Lower leg skin (tissue), 4 donors: ENCODE measurements at regions of chr4 and their contacts with region 1.

Region 1: DNA sequence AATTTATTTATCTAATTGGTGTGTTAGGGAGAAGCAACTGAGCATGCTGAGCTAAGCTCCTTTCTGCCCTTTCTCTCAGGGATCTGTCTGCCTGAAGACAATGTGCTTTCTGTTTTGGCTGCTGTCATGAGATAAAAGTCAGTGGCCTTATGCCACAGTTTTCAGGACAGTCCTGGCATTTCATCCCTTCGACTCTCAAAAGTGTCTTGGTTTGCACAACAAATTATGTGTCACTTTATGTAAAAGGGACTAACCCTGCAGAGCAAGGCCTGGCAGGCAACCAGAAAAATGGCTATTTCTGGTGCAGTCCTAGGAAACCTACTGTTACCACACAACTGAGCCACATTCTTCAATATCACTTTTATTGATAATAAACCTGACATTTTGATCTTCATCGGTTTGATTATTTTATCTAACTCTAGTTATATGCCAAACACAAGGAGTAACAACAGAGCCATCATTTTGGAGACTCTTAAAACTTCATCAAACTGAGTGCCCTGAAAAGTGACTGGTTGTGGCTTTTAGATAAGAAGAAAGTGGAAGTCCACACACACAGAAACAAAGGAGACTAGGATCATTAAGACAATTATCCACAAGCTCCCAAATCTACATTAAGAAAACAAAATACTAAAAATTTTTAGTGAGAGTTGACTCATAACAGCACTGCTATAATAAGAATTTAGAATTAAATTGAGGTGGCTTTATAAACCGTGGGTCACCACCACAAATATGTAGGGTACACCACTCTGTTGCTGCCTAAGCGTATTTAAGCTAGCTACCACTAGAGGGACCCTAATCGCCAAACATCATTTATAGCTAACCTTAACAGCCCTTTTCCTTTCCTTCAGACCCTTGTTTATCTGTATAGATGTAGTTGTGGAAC is 95.9 kb upstream of the PTPN13 start:
- DNase-seq: peak; percentile 47 to 84
- H3K4me3 ChIP-seq: no peak overlapping the region
- CTCF ChIP-seq: no peak
- POLR2A ChIP-seq: no peak

Region 2: DNA sequence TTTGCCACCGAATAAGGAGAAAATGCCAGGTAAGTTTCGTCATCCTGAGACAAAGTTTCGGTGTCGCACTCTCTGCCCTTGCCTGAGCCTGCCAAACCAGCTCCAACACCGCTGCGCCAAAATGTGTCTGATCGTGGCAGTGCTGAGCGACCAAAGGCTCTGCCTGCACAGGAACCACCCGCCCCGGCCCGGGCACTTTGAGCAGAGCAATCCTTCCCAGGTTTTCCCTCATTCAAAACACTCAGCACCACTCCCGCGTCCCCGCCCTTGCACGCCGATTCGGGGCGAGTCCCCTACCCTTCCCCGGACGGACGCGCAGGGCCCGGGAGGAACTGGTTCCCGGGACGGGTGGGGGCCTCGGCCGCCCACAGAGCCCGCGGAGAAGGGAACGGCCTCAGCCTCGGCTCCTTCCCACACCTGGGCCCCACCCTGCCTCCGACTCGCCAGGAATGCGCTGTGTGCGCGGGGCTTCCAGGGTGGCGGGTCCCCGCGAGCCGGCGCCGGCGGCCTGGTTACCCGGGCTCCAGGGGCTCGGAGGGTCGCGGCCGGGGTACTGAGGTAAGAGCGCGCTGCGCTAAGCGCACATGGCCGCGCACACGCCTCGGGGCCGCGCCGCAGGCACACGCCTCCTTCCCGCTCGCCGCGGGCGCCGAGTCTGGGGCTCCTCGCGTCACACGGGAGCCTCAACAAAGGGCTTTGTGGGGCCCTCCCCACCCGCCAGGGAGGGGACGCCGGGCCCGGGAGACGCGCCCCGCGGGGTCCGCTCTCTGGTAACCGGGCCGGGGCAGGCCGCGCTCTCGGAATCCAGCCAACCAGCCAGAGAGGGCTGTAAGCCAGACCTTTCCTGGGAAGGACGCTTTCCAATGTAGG is 393.8 kb after region 1 on chr4 and contains the start of gene C4orf36:
- intact Hi-C with region 1: loop called (anchors 5 kb)
- DNase-seq: peak; percentile 82 to 95
- H3K4me3 ChIP-seq: peak within 1 kb of the TSS; percentile 57
- CTCF ChIP-seq: no peak
- POLR2A ChIP-seq: no peak
- total RNA-seq, gene C4orf36: 2.8 to 4.7 (median 3.4) TPM in 3 of 4 donors, not detected in the other